ENCODE measurements at regions of chr5 and their contacts with region 1.

Region 1: GRCh38 chr5:176979669-176980068 is 26.9 kb downstream of the UIMC1 start:
- DNase-seq: no peak
- ATAC-seq: no peak
- H3K4me3 ChIP-seq: no peak overlapping the region
- H3K4me3 Mint-ChIP-seq: no peak overlapping the region
- H3K27ac ChIP-seq: no peak overlapping the region
- H3K27ac Mint-ChIP-seq: peak overlapping the region in 2 of 9 donors; percentile 45 to 72
- H3K4me1 ChIP-seq: no peaks in the 10 kb centered on the region
- H3K4me1 Mint-ChIP-seq: peaks cover 0 to 13% (median 0%) of the 10 kb centered on the region in 7 donors
- H3K27me3 ChIP-seq: no peaks in the 10 kb centered on the region
- H3K27me3 Mint-ChIP-seq: no peaks in the 10 kb centered on the region

Region 2: DNA sequence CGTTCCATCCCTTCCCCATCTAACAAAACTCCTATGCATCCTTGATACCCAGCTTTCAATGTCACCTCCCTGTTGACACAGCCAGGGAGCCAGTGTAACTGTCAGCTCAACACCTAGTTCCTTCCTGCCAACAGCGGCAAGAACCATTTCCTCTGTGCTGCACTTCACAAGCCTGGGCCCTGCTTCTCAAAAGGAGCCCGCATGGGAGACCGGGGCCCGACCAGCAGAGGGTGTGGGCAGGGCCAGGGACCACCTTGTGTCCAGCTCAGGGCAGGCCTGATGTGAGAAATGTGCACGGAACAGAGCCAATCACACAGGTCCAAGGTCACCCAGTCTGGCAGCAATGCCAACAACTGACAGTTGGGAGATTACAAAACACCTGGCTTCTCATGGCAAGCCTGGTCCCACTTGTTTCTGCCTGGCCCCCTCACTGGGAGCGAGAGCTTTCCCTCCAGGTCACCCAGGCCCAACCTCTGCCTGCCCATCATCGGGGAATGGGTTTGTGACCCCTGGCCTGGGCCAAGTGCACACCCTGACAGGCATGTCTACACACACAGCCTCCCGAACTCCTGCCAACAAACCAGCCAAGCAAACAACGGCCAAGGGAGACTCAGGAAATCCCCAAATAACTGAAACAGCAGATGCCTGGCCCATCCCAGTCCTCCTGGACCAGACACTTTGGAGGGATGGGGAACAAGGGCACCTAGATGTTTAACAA is 445.6 kb before region 1 on chr5:
- CTCF ChIA-PET with region 1: no interaction called
- POLR2A ChIA-PET with region 1: no interaction called
- intact Hi-C with region 1: no loop called
- DNase-seq: peak in 8 of 9 donors; percentile 42 to 69 (median 60)
- ATAC-seq: no peak
- H3K4me3 ChIP-seq: peak overlapping the region; percentile 100
- H3K4me3 Mint-ChIP-seq: peak overlapping the region; percentile 96 to 100 (median 99)
- H3K27ac ChIP-seq: peak overlapping the region; percentile 96
- H3K27ac Mint-ChIP-seq: peak overlapping the region; percentile 88 to 100 (median 99)
- H3K4me1 ChIP-seq: peaks cover 64% of the 10 kb centered on the region in 2 donors
- H3K4me1 Mint-ChIP-seq: peaks cover 41 to 59% (median 52%) of the 10 kb centered on the region in 7 donors
- H3K27me3 ChIP-seq: no peaks in the 10 kb centered on the region
- H3K27me3 Mint-ChIP-seq: no peaks in the 10 kb centered on the region

Region 3: DNA sequence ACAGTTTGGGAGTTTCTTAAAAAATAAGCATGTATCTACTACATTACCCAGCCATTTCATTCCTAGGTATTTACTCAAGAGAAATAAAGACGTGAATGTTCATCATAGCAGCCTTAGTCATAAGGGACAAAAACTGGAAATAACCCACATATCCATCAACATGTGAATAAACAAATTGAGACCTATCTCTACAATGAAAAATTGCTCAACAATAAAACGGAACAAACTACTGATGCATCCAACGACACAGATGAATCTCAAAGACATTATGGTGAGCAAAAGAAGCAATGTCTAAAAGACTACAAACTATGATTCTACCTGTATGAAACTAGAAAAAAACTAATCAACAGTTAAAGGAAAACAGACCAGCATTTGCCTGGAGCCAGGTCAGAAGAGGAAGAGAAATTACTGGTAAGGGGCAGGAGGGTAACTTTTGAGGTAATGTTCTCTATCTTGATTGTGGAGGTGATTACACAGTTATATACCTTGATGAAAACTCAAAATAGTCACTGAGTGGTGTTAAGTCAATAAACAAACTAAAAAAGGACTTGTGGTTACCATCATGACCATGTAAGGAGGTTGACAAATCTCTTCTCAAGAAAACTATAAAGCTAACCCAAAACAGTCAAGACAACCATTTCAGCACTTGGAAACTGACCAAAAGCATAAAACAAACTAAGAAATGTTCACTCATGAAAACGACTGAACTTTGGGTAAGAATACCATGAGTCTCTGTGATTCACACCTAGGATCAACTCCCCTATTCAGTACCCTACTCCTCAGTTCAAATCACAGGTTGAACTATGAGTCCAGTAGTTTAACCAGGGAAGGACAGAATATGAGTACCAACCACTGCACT is 16.5 kb after region 1 on chr5:
- CTCF ChIA-PET with region 1: no interaction called
- POLR2A ChIA-PET with region 1: no interaction called
- intact Hi-C with region 1: loop called in 1 of 2 experiments (anchors 1 kb)
- DNase-seq: no peak
- ATAC-seq: peak; percentile 62
- H3K4me3 ChIP-seq: no peak overlapping the region
- H3K4me3 Mint-ChIP-seq: peak overlapping the region in 2 of 10 donors; percentile 4 to 7
- H3K27ac ChIP-seq: no peak overlapping the region
- H3K27ac Mint-ChIP-seq: peak overlapping the region in 2 of 9 donors; percentile 38 to 84
- H3K4me1 ChIP-seq: peaks cover 0 to 5% of the 10 kb centered on the region in 2 donors
- H3K4me1 Mint-ChIP-seq: peaks cover 30 to 62% (median 42%) of the 10 kb centered on the region in 7 donors
- H3K27me3 ChIP-seq: no peaks in the 10 kb centered on the region
- H3K27me3 Mint-ChIP-seq: no peaks in the 10 kb centered on the region

Region 4: DNA sequence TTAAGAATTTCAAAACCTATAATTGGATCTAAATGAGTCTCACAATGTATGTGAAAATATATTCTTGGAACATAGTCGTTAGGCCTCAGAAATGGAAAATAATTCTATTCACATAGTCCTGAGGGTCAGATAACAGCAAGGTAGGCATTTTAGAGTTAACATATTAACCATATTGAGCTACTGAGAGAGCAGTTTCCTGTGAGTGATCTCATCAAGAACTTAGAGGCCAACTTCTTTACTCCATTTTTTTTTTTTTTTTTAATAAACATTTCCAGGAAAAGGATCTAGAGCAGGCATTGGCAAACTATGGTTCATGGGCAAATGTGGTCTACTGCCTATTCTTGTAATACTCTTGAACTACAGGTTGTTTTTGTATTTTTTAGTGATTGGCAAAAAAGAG is 297.2 kb after region 1 on chr5:
- CTCF ChIA-PET with region 1: no interaction called
- POLR2A ChIA-PET with region 1: no interaction called
- intact Hi-C with region 1: no loop called
- DNase-seq: no peak
- ATAC-seq: no peak
- H3K4me3 ChIP-seq: no peak overlapping the region
- H3K4me3 Mint-ChIP-seq: no peak overlapping the region
- H3K27ac ChIP-seq: no peak overlapping the region
- H3K27ac Mint-ChIP-seq: peak overlapping the region in 5 of 9 donors; percentile 34 to 78 (median 51)
- H3K4me1 ChIP-seq: no peaks in the 10 kb centered on the region
- H3K4me1 Mint-ChIP-seq: peaks cover 0 to 12% (median 4%) of the 10 kb centered on the region in 7 donors
- H3K27me3 ChIP-seq: no peaks in the 10 kb centered on the region
- H3K27me3 Mint-ChIP-seq: no peaks in the 10 kb centered on the region